ENCODE measurements at regions of chr15 and their contacts with region 1.

Region 1: DNA sequence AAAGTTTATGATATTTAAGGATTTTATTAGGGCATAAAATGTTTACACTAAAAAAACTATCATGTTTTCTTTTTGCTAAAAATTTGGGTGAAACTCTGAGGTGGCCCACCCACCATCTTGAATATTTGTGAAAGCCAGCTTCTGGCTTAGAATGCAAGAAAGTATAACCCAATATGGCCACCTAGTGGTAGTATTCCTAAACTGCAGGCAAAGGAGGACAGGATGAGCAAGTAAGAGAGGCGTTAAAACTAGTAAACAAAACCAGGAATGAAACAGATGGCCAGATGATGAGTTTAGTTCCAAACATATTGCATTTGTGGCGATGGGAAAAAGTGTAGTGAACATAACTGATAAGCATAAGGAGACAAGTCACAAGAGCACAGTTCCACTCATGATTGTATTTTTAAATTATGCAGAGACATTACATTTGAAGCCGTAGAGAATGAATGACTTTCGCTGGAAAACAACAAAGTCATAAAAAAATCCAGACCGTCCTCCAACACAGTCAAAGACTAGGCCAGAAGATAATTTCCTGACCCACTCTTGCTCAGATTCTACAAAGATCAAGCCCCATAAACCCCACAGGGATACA is 103.3 kb upstream of the PRTG start:
- DNase-seq: peak; percentile 31 to 57
- H3K4me3 ChIP-seq: no peak overlapping the region
- H3K27ac ChIP-seq: no peak overlapping the region
- H3K4me1 ChIP-seq: no peaks in the 10 kb centered on the region
- H3K27me3 ChIP-seq: no peaks in the 10 kb centered on the region
- CTCF ChIP-seq: peak in 2 of 3 experiments; percentile 69 to 79; a peak in 3 of 4 replicates
- EP300 ChIP-seq: no peak
- POLR2A ChIP-seq: no peak
- RAD21 ChIP-seq: peak; percentile 80 to 85

Region 2: GRCh38 chr15:55827204-55827603 is 19.0 kb before region 1 on chr15:
- CTCF ChIA-PET with region 1: interaction called, 16 read pairs
- POLR2A ChIA-PET with region 1: no interaction called
- DNase-seq: no peak
- H3K4me3 ChIP-seq: no peak overlapping the region
- H3K27ac ChIP-seq: no peak overlapping the region
- H3K4me1 ChIP-seq: no peaks in the 10 kb centered on the region
- H3K27me3 ChIP-seq: no peaks in the 10 kb centered on the region
- CTCF ChIP-seq: peak in 1 of 3 experiments; percentile 23; a peak in 1 of 4 replicates
- EP300 ChIP-seq: no peak
- POLR2A ChIP-seq: no peak
- RAD21 ChIP-seq: no peak; a peak in 1 of 4 replicates

Region 3: GRCh38 chr15:55834331-55834730 is 11.9 kb before region 1 on chr15:
- CTCF ChIA-PET with region 1: interaction called, 21 read pairs
- POLR2A ChIA-PET with region 1: no interaction called
- DNase-seq: no peak
- H3K4me3 ChIP-seq: no peak overlapping the region
- H3K27ac ChIP-seq: no peak overlapping the region
- H3K4me1 ChIP-seq: no peaks in the 10 kb centered on the region
- H3K27me3 ChIP-seq: no peaks in the 10 kb centered on the region
- CTCF ChIP-seq: no peak
- EP300 ChIP-seq: no peak
- POLR2A ChIP-seq: no peak
- RAD21 ChIP-seq: no peak

Region 4: GRCh38 chr15:55999636-56000035 is 153.4 kb after region 1 on chr15:
- CTCF ChIA-PET with region 1: no interaction called
- POLR2A ChIA-PET with region 1: no interaction called
- DNase-seq: no peak
- H3K4me3 ChIP-seq: no peak overlapping the region
- H3K27ac ChIP-seq: no peak overlapping the region
- H3K4me1 ChIP-seq: no peaks in the 10 kb centered on the region
- H3K27me3 ChIP-seq: peaks cover 0 to 3% (median 0%) of the 10 kb centered on the region in 4 experiments; a peak in 2 of 7 replicates
- CTCF ChIP-seq: no peak
- EP300 ChIP-seq: no peak
- POLR2A ChIP-seq: no peak
- RAD21 ChIP-seq: no peak